Ovary (tissue), 10 donors: ENCODE measurements at regions of chr7 and their contacts with region 1.

Region 1: GRCh38 chr7:47581806-47582763 is at the start of gene TNS3:
- DNase-seq: peak; percentile 62 to 78 (median 71)
- H3K4me3 ChIP-seq: peak within 1 kb of the TSS; percentile 64
- H3K27ac ChIP-seq: peak within 1 kb of the TSS; percentile 72 to 81
- H3K4me1 ChIP-seq: peaks cover 35% of the 10 kb centered on the region
- H3K27me3 ChIP-seq: no peaks in the 10 kb centered on the region
- CTCF ChIP-seq: peak in 1 of 3 donors; percentile 37
- EP300 ChIP-seq: no peak
- POLR2A ChIP-seq: no peak
- total RNA-seq, gene TNS3: 46.1 to 137 (median 96.3) TPM

Region 2: GRCh38 chr7:47807756-47808155 is 225.7 kb after region 1 on chr7:
- intact Hi-C with region 1: loop called in 2 of 4 experiments (anchors 10 kb)
- DNase-seq: no peak
- H3K4me3 ChIP-seq: no peak overlapping the region
- H3K27ac ChIP-seq: no peak overlapping the region
- H3K4me1 ChIP-seq: peaks cover 17% of the 10 kb centered on the region
- H3K27me3 ChIP-seq: no peaks in the 10 kb centered on the region
- CTCF ChIP-seq: no peak
- EP300 ChIP-seq: no peak
- POLR2A ChIP-seq: no peak